Common myeloid progenitor, CD34-positive (primary cell): ENCODE measurements at regions of chr14 and their contacts with region 1.

Region 1: GRCh38 chr14:105448706-105449111 is 25.9 kb upstream of the CRIP2 start:
- DNase-seq: peak; percentile 52 to 76 (median 71)
- H3K4me3 ChIP-seq: no peak overlapping the region
- H3K27ac ChIP-seq: no peak overlapping the region
- H3K4me1 ChIP-seq: no peaks in the 10 kb centered on the region
- H3K27me3 ChIP-seq: no peaks in the 10 kb centered on the region

Region 2: GRCh38 chr14:105436891-105437722 is 11.6 kb before region 1 on chr14:
- CTCF ChIA-PET with region 1: interaction called, 11 read pairs
- POLR2A ChIA-PET with region 1: no interaction called
- DNase-seq: no peak
- H3K4me3 ChIP-seq: no peak overlapping the region
- H3K27ac ChIP-seq: no peak overlapping the region
- H3K4me1 ChIP-seq: no peaks in the 10 kb centered on the region
- H3K27me3 ChIP-seq: no peaks in the 10 kb centered on the region

Region 3: GRCh38 chr14:105480952-105481801 is 32.5 kb after region 1 on chr14:
- CTCF ChIA-PET with region 1: interaction called, 11 read pairs
- POLR2A ChIA-PET with region 1: interaction called, 3 read pairs
- DNase-seq: peak; percentile 89 to 93 (median 90)
- H3K4me3 ChIP-seq: peak overlapping the region; percentile 23 to 78 (median 53)
- H3K27ac ChIP-seq: peak overlapping the region; percentile 93 to 97
- H3K4me1 ChIP-seq: peaks cover 0 to 89% (median 57%) of the 10 kb centered on the region in 4 experiments
- H3K27me3 ChIP-seq: peaks cover 0 to 58% (median 20%) of the 10 kb centered on the region in 5 experiments

Region 4: GRCh38 chr14:105490572-105491366 is 42.1 kb after region 1 on chr14 and contains the start of gene TEDC1:
- CTCF ChIA-PET with region 1: interaction called, 11 read pairs
- POLR2A ChIA-PET with region 1: interaction called, 3 read pairs
- DNase-seq: peak; percentile 100
- H3K4me3 ChIP-seq: peak within 1 kb of the TSS; percentile 58 to 83 (median 75)
- H3K27ac ChIP-seq: peak within 1 kb of the TSS; percentile 70 to 88
- H3K4me1 ChIP-seq: peaks cover 0 to 55% (median 52%) of the 10 kb centered on the region in 4 experiments
- H3K27me3 ChIP-seq: peaks cover 0 to 29% (median 5%) of the 10 kb centered on the region in 5 experiments

Region 5: GRCh38 chr14:105622322-105622955 is 173.7 kb after region 1 on chr14:
- CTCF ChIA-PET with region 1: no interaction called
- POLR2A ChIA-PET with region 1: no interaction called
- DNase-seq: no peak
- H3K4me3 ChIP-seq: no peak overlapping the region
- H3K27ac ChIP-seq: no peak overlapping the region
- H3K4me1 ChIP-seq: no peaks in the 10 kb centered on the region
- H3K27me3 ChIP-seq: peaks cover 0 to 2% (median 0%) of the 10 kb centered on the region in 5 experiments